ENCODE measurements at regions of chr5 and their contacts with region 1.

Region 1: DNA sequence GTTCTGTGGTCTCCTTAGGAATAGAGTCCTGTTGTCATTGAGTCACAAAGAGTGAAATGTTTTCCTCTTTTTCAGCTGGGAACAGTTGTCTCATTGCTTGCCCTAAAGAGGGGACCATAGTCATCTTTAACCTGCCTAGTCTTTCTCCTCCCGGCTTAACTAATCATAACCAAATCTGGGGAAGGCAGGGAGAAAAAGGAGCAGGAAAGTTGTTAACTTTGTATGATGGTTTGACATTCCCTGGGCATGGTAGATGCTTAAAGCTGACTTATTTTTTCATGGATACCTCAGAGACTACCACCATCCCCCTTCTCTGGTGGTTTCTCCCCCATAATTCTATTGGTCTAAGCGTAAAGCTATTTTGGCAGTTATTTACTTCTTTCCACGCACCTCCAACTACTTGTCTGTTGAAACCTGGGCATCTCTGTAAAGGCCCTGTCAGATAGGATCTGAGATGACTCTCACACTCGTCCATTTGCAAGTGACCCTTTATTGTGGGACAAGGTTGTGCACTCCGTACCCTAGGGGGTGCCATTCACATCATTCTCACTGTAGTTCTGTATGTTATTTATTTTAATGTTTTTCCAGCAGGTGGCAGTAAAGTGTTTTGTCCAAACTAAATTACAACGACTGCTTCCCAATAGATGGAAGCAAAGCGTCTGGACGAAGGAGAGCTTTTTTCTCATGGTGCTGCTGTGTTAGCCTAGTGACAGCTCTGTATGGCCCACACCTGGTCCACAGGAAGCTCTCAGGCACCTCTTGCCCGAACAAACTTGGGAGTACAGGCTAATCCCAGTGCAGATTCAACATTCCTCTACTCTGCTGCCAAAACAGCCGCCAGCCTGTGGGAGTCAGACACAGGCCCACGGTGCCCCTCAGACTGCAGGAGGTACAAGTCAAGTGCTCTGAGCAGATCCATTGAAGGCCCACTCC is 3.0 kb upstream of the FAM13B start:
- DNase-seq: peak in 1 of 2 donors; percentile 79
- H3K4me3 ChIP-seq: no peak overlapping the region
- H3K27ac ChIP-seq: peak overlapping the region; percentile 19 to 50
- H3K4me1 ChIP-seq: peaks cover 4 to 17% of the 10 kb centered on the region in 2 donors
- H3K27me3 ChIP-seq: no peaks in the 10 kb centered on the region
- CTCF ChIP-seq: peak; percentile 77 to 89 (median 84)

Region 2: DNA sequence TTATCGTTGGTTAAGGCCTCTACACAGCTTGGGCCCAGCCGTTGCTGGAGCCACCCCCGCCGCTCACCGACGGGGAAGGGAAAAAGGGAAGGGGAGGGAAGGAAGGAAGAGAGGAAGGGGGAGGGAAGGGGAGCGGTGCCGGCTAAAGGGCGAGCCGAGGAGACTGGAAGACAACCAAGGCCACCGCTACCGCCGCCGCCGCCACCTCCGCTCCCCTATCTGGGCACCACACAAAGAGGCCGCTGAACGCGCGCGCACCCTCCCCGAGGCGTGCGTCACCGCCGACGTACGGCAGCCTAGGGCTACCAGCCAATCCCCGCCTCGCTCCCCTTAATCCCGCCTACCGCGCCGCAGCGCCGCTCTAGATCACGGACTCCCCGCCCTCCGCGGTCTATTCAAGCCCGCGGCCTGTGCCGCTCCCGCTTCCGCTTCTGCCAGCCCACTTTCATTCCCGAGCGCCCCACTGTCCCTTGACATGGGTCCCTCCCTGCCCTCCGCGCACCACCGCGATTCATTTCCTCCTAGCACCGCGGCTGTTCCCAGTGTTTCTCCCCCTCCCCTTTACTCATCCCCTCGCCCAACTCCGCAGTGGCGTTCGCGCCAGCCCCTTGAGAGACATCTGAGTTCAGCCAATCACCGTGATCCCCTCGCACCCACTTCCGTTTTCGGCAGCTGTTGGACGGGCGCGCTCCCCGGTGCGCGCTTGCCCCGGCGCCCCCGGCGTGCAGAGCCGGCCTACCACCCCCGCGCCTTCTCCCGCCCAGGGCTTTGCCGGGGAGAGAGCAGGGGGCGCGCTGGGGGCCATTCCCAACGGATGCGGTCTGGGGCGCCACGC is 281.5 kb before region 1 on chr5 and contains the start of gene HNRNPA0:
- intact Hi-C with region 1: loop called (anchors 2 kb)
- DNase-seq: peak; percentile 83 to 98
- H3K4me3 ChIP-seq: peak within 1 kb of the TSS; percentile 87 to 93
- H3K27ac ChIP-seq: peak within 1 kb of the TSS; percentile 99 to 100
- H3K4me1 ChIP-seq: peaks cover 4 to 17% of the 10 kb centered on the region in 2 donors
- H3K27me3 ChIP-seq: no peaks in the 10 kb centered on the region
- CTCF ChIP-seq: peak in 1 of 3 experiments; percentile 5
- total RNA-seq, gene HNRNPA0: 8.6 TPM

Region 3: GRCh38 chr5:137833463-137833862 is 202.4 kb before region 1 on chr5:
- intact Hi-C with region 1: loop called (anchors 5 kb)
- DNase-seq: no peak
- H3K4me3 ChIP-seq: no peak overlapping the region
- H3K27ac ChIP-seq: peak overlapping the region in 1 of 2 donors; percentile 35
- H3K4me1 ChIP-seq: peaks cover 8 to 20% of the 10 kb centered on the region in 2 donors
- H3K27me3 ChIP-seq: no peaks in the 10 kb centered on the region
- CTCF ChIP-seq: no peak

Region 4: DNA sequence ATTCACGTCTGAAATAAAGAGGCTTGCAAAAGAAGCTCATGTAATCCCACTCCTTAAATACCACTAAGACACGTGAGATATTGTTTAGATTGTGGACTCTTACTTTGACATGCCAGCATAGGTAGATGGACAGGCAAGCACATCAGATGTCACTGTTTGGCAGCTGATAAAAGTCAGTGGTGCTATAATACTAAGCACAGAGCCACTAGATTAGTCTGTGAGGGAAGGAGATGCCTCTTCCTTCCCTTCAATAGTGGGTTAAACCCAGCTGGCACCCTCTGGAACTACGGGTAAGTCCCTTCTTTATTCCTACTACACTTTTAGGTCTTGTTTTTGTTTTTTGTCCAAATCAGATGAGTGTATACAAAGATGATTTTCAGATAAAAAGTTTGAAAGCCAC is 168.2 kb before region 1 on chr5 and contains the start of gene MYOT:
- intact Hi-C with region 1: no loop called
- DNase-seq: no peak
- H3K4me3 ChIP-seq: no peak within 1 kb of the TSS
- H3K27ac ChIP-seq: no peak within 1 kb of the TSS
- H3K4me1 ChIP-seq: no peaks in the 10 kb centered on the region
- H3K27me3 ChIP-seq: no peaks in the 10 kb centered on the region
- CTCF ChIP-seq: no peak
- total RNA-seq, gene MYOT: 12.3 TPM

Region 5: DNA sequence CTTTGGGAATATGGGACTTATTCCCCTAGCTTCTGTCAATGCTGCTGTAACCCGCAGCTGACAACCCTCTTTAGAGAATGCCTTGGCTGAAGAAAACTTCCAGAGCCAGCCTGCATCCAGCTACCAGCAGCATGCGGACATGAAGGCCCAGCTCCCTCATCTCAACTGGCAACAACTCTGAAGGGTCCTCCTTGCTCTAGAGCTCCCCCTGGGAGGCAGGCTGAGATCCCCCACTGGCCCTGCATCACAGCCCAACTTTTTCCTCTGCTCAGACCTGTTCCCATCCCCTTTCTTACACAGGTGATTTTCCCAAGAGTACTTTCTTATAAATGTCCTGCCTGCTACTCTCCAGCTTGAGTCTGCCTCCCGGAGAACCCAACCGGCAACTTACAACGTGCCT is 29.2 kb after region 1 on chr5:
- intact Hi-C with region 1: loop called (anchors 1 kb)
- DNase-seq: no peak
- H3K4me3 ChIP-seq: no peak overlapping the region
- H3K27ac ChIP-seq: no peak overlapping the region
- H3K4me1 ChIP-seq: peaks cover 0 to 3% of the 10 kb centered on the region in 2 donors
- H3K27me3 ChIP-seq: no peaks in the 10 kb centered on the region
- CTCF ChIP-seq: no peak

Region 6: GRCh38 chr5:138128334-138128733 is 92.5 kb after region 1 on chr5:
- intact Hi-C with region 1: loop called (anchors 1 kb)
- DNase-seq: no peak
- H3K4me3 ChIP-seq: no peak overlapping the region
- H3K27ac ChIP-seq: no peak overlapping the region
- H3K4me1 ChIP-seq: no peaks in the 10 kb centered on the region
- H3K27me3 ChIP-seq: no peaks in the 10 kb centered on the region
- CTCF ChIP-seq: no peak

Region 7: GRCh38 chr5:138331449-138332368 is 295.8 kb after region 1 on chr5 and contains the start of gene CDC25C:
- intact Hi-C with region 1: loop called (anchors 2 kb)
- DNase-seq: peak; percentile 98 to 99
- H3K4me3 ChIP-seq: peak within 1 kb of the TSS; percentile 47 to 65
- H3K27ac ChIP-seq: no peak within 1 kb of the TSS
- H3K4me1 ChIP-seq: peaks cover 0 to 3% of the 10 kb centered on the region in 2 donors
- H3K27me3 ChIP-seq: no peaks in the 10 kb centered on the region
- CTCF ChIP-seq: no peak
- total RNA-seq, gene CDC25C: not detected

Region 8: GRCh38 chr5:138402640-138403039 is 366.8 kb after region 1 on chr5:
- intact Hi-C with region 1: no loop called
- DNase-seq: no peak
- H3K4me3 ChIP-seq: no peak overlapping the region
- H3K27ac ChIP-seq: no peak overlapping the region
- H3K4me1 ChIP-seq: no peaks in the 10 kb centered on the region
- H3K27me3 ChIP-seq: no peaks in the 10 kb centered on the region
- CTCF ChIP-seq: no peak